ENCODE measurements at regions of chr10 and their contacts with region 1.

Region 1: GRCh38 chr10:101441541-101442455 is 87.8 kb downstream of the BTRC start:
- DNase-seq: peak; percentile 41
- ATAC-seq: peak; percentile 94
- H3K4me3 Mint-ChIP-seq: no peak overlapping the region
- H3K27ac Mint-ChIP-seq: no peak overlapping the region
- H3K4me1 Mint-ChIP-seq: peaks cover 3% of the 10 kb centered on the region
- H3K27me3 Mint-ChIP-seq: no peaks in the 10 kb centered on the region
- CTCF ChIP-seq: peak; percentile 75

Region 2: GRCh38 chr10:101272229-101272868 is 169.4 kb before region 1 on chr10:
- CTCF ChIA-PET with region 1: interaction called, 28 read pairs
- POLR2A ChIA-PET with region 1: no interaction called
- intact Hi-C with region 1: no loop called
- DNase-seq: peak; percentile 73
- ATAC-seq: peak; percentile 93
- H3K4me3 Mint-ChIP-seq: no peak overlapping the region
- H3K27ac Mint-ChIP-seq: no peak overlapping the region
- H3K4me1 Mint-ChIP-seq: peaks cover 2% of the 10 kb centered on the region
- H3K27me3 Mint-ChIP-seq: peaks cover 20% of the 10 kb centered on the region
- CTCF ChIP-seq: peak; percentile 80

Region 3: DNA sequence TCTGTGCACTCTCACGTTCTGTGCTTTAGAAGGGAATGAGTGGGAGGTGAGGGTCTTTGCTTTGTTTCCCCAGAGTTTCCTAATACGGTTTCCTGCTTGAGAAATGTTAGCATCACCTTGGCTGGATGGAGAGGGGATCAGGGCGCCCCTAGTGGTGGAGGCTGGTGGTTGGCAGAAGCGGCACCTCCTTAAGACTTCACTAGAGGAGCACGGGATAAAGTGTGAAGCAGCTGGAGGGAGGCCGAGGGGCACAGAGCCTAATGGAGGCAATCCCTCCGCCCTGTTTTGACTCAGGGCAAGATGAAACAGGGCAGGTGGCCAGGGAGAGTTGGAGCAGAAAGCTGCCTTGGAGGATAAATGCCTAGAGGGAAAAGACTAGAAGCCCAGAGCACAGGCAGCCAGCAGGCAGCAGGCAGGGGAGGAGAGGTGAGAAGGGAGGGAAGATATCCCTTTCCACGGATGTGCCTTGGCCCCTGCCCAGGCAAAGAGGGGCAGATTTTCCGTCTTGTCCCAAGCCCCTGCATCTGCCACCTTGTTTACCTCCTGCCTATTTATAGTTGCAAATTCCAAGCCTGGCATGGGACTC is 143.8 kb before region 1 on chr10:
- CTCF ChIA-PET with region 1: interaction called, 24 read pairs
- POLR2A ChIA-PET with region 1: no interaction called
- intact Hi-C with region 1: loop called (anchors 5 kb)
- DNase-seq: peak; percentile 88
- ATAC-seq: peak; percentile 91
- H3K4me3 Mint-ChIP-seq: no peak overlapping the region
- H3K27ac Mint-ChIP-seq: no peak overlapping the region
- H3K4me1 Mint-ChIP-seq: no peaks in the 10 kb centered on the region
- H3K27me3 Mint-ChIP-seq: peaks cover 37% of the 10 kb centered on the region
- CTCF ChIP-seq: peak; percentile 94

Region 4: DNA sequence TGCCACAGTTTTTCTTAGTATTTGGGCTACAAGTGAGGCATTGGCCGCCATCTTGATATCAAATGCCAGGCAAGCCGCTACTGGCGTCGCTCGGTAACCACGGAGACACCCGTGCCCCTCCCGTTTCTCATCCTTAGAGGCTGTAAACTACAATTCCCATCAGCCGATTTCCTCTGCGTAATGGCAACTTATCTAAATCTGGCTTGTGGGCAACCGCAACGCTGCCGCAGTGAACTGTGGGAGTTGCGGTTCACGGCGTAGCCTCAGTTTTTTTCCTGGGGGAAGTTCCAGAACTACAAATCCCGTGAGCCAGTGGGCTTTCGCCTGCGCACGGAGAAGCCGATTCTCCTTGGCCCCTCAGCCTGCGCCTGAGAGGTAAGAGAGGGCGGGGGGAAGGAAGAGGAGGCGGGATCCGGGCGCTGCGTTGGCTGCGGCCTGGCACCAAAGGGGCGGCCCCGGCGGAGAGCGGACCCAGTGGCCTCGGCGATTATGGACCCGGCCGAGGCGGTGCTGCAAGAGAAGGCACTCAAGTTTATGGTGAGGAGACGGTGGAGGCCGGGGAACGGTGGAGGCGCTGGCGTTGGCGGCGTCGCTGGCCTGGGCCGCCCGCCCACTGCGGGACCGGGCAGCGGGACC is 88.0 kb before region 1 on chr10 and contains the start of gene BTRC:
- CTCF ChIA-PET with region 1: interaction called, 10 read pairs
- POLR2A ChIA-PET with region 1: no interaction called
- intact Hi-C with region 1: no loop called
- DNase-seq: peak; percentile 97
- ATAC-seq: peak; percentile 98
- H3K4me3 Mint-ChIP-seq: peak within 1 kb of the TSS; percentile 87
- H3K27ac Mint-ChIP-seq: peak within 1 kb of the TSS; percentile 95
- H3K4me1 Mint-ChIP-seq: peaks cover 28% of the 10 kb centered on the region
- H3K27me3 Mint-ChIP-seq: peaks cover 14% of the 10 kb centered on the region
- CTCF ChIP-seq: no peak
- total RNA-seq, gene BTRC: 11.6 to 14.6 TPM

Region 5: GRCh38 chr10:101467286-101467770 is 25.5 kb after region 1 on chr10:
- CTCF ChIA-PET with region 1: interaction called, 13 read pairs
- POLR2A ChIA-PET with region 1: no interaction called
- intact Hi-C with region 1: no loop called
- DNase-seq: peak; percentile 29
- ATAC-seq: peak; percentile 88
- H3K4me3 Mint-ChIP-seq: no peak overlapping the region
- H3K27ac Mint-ChIP-seq: no peak overlapping the region
- H3K4me1 Mint-ChIP-seq: peaks cover 8% of the 10 kb centered on the region
- H3K27me3 Mint-ChIP-seq: no peaks in the 10 kb centered on the region
- CTCF ChIP-seq: peak; percentile 75